ENCODE measurements at regions of chr16 and their contacts with region 1.

Region 1: GRCh38 chr16:47018223-47018891 is 44.9 kb upstream of the DNAJA2 start:
- DNase-seq: peak; percentile 88
- CTCF ChIP-seq: peak; percentile 70

Region 2: GRCh38 chr16:46836534-46837530 is 181.5 kb before region 1 on chr16:
- CTCF ChIA-PET with region 1: no interaction called
- POLR2A ChIA-PET with region 1: no interaction called
- DNase-seq: no peak
- CTCF ChIP-seq: no peak

Region 3: DNA sequence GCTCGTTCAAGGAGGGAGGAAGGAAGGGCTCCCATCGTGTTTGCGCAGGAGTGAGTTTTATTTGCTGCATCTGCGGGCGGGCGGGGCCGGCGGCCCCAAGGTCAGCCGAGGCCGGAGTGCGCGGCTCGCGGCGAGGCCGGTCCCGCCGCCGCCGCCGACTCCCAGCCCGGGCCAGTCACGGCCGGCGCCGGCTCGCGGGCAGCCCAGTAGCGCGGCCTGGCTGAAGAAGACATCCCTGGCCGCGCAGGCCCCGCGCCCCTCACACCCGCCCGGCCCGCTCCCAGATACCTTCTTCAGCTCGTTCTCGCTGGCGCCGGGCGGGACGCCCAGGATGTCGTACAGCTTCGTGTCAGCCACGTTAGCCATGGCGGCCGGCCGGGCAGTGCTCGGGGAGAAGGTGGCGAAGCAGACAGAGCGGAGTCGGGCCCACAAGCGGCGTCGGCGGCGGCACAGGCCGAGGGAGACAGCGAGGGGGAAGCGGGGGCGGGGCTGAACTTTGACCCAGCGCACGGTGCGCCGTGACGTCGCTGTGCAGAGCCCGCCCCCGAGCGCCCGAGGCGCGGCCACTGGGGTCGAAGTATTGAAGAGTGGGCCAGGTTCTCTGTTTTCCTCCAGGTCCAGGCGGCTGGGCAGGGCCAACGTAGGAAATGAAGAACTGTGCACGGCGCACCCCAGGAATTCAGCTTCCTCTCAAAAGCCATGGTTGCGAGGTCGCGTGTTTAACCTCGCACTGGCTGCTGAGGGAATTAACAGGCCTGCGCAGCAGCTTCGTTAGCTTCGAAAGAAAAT is 45.0 kb before region 1 on chr16 and contains the start of gene DNAJA2:
- CTCF ChIA-PET with region 1: interaction called, 26 read pairs
- POLR2A ChIA-PET with region 1: no interaction called
- DNase-seq: peak; percentile 93
- CTCF ChIP-seq: no peak

Region 4: GRCh38 chr16:47028767-47029377 is 10.5 kb after region 1 on chr16:
- CTCF ChIA-PET with region 1: interaction called, 14 read pairs
- POLR2A ChIA-PET with region 1: no interaction called
- DNase-seq: no peak
- CTCF ChIP-seq: no peak

Measured in GM10248 (cell line).